ENCODE measurements at regions of chr17 and their contacts with region 1.

Region 1: GRCh38 chr17:73371285-73371684 is 59.5 kb upstream of the CDC42EP4 start:
- DNase-seq: no peak
- H3K4me3 ChIP-seq: no peak overlapping the region
- H3K27ac ChIP-seq: no peak overlapping the region
- H3K4me1 ChIP-seq: no peaks in the 10 kb centered on the region
- H3K27me3 ChIP-seq: no peaks in the 10 kb centered on the region
- CTCF ChIP-seq: no peak
- POLR2A ChIP-seq: no peak

Region 2: DNA sequence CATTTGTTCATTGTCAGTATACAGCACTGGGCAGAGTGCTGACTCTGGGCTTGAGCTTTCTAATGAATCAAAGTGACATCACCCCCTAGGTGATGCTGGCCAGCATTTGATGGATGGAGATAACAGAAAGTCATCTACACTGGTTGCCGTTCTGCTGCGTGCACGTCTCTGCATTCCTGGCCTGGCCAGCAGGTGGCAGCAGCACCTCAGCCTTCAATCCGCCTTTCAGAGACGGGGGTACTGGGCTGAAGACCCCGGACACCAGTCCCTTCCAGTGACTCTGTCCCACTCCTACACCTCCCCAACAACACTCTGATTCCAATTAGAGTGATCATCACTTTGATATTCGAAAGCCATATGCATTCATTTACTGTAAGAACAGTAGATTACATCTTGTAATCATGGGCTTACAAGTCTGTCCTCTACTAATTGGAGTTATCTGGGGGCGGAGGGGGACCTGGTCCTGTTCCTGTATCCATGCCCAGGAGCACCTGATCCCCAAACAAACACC is 115.6 kb before region 1 on chr17:
- intact Hi-C with region 1: loop called (anchors 1 kb)
- DNase-seq: peak; percentile 41
- H3K4me3 ChIP-seq: no peak overlapping the region
- H3K27ac ChIP-seq: no peak overlapping the region
- H3K4me1 ChIP-seq: no peaks in the 10 kb centered on the region
- H3K27me3 ChIP-seq: no peaks in the 10 kb centered on the region
- CTCF ChIP-seq: peak; percentile 97 to 99 (median 98)
- POLR2A ChIP-seq: no peak

Measured in prostate gland (tissue), 2 donors.